ENCODE measurements at regions of chr2 and their contacts with region 1.

Region 1: DNA sequence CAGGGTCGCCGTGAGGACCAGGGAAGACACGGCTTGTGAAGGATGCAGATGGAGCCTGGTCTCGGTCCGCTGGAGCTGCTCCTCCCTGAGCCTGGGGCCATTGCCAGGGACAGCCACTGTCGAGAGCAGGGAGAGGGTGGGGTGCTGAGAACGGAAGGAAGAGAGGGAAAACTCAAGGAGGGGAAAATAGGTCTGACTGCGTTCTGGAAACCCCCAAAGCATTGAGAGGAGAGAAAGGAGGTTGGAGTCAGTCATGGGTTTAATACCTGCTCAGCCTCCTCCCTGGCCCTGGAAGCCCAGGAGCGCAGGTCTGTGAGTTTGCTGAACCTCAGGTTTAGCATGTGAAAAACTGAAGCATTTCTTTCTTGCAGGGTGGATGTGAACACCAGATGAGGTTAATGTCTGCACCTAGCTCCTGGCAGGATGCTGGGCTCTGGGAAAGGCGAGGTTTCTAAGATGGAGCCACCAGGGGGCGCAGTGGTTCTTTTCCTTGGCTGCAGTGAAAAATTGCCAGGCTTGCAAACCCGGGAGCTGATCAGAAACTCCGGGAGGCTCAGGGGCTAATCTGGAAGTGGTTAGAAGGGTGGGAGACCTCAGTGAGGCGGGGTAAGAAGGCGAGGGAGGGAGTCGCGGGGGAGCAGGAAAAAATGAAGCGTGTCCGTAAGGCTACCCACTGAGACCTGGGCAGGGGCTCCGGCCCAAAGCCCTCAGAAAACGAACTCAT is 33.6 kb upstream of the RNF149 start:
- DNase-seq: peak; percentile 68
- H3K4me3 ChIP-seq: no peak overlapping the region
- H3K27ac ChIP-seq: no peak overlapping the region
- H3K4me1 ChIP-seq: peaks cover 9% of the 10 kb centered on the region
- H3K27me3 ChIP-seq: no peaks in the 10 kb centered on the region
- CTCF ChIP-seq: peak; percentile 75 to 87
- POLR2A ChIP-seq: no peak

Region 2: DNA sequence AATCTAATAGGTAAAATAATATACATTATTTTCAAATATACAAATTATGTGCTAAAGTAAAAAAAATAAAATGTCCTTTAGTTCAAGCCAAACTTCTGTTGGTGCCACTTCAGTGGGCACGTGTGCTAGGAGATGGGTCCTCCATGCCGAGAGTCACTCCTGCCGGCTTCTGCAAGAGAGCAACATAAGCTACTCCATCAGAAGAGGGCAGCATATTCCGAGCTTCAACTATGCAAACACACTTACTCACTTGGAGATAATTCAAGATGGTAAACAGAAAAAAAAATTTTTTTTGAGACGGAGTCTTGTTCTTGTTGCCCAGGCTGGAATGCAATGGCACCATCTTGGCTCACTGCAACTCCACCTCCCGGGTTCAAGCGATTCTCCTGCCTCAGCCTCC is 65.0 kb before region 1 on chr2:
- CTCF ChIA-PET with region 1: interaction called, 13 read pairs
- POLR2A ChIA-PET with region 1: no interaction called
- dilution Hi-C with region 1: no loop called
- intact Hi-C with region 1: no loop called
- DNase-seq: peak; percentile 15
- H3K4me3 ChIP-seq: no peak overlapping the region
- H3K27ac ChIP-seq: no peak overlapping the region
- H3K4me1 ChIP-seq: peaks cover 3% of the 10 kb centered on the region
- H3K27me3 ChIP-seq: no peaks in the 10 kb centered on the region
- CTCF ChIP-seq: no peak
- POLR2A ChIP-seq: no peak

Region 3: DNA sequence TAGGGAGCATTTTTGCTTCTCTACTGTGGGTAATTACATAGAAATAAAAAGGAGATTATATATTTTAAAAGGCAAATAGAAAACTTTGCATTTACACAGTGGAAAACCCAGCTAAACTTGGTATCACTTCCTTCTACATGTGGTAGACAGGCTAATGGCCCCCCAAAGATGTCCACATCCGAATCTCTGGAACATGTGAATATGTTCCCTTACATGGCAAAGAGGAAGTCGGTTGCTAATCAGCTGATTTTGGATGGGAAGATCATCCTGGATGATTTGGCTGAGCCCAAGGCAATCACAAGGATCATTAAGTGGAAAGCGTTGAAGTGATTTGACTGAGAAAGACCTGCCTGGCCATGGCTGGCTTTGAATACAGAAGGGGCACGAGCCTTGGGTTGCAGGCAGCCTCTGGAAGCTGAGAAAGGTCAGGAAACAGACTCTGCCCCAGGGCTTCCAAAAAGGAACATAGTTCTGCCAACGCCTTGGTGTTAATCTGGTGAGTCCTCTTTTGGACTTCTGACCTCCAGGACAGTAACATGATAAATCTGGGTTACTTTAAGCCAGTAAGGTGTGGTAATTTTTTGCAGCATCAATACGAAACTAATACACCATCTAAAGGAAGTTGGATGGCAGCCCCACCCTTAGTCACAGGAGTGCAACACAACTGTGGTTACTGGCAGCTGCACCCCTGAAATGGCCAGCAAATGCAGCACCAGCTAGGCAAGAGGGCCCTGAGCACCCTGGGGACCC is 19.2 kb after region 1 on chr2:
- CTCF ChIA-PET with region 1: interaction called, 15 read pairs
- POLR2A ChIA-PET with region 1: no interaction called
- dilution Hi-C with region 1: no loop called
- intact Hi-C with region 1: no loop called
- DNase-seq: no peak
- H3K4me3 ChIP-seq: no peak overlapping the region
- H3K27ac ChIP-seq: no peak overlapping the region
- H3K4me1 ChIP-seq: no peaks in the 10 kb centered on the region
- H3K27me3 ChIP-seq: peaks cover 12 to 20% of the 10 kb centered on the region in 2 experiments
- CTCF ChIP-seq: no peak
- POLR2A ChIP-seq: no peak

Region 4: DNA sequence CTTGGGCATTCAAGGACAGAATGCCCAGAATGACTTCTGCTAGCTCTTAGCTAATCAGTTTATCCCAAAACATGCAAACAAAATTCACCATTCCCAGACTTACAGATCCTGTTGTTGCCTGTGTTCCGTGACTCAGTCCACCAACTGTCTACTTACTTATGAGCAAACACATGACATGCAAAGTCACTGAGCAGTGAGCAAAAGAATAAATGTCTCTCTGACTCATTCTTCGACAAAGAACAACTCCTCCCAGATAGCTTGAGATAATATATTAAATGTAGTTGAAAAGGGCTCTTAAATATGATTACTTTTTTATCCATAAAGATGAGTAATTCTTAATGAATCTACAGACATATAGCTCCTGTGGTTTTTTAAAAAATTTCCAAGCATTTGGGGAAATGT is 54.3 kb after region 1 on chr2:
- CTCF ChIA-PET with region 1: interaction called, 24 read pairs
- POLR2A ChIA-PET with region 1: no interaction called
- dilution Hi-C with region 1: no loop called
- intact Hi-C with region 1: no loop called
- DNase-seq: peak; percentile 89
- H3K4me3 ChIP-seq: no peak overlapping the region
- H3K27ac ChIP-seq: peak overlapping the region; percentile 55
- H3K4me1 ChIP-seq: peaks cover 4% of the 10 kb centered on the region
- H3K27me3 ChIP-seq: no peaks in the 10 kb centered on the region
- CTCF ChIP-seq: no peak
- POLR2A ChIP-seq: no peak

Region 5: DNA sequence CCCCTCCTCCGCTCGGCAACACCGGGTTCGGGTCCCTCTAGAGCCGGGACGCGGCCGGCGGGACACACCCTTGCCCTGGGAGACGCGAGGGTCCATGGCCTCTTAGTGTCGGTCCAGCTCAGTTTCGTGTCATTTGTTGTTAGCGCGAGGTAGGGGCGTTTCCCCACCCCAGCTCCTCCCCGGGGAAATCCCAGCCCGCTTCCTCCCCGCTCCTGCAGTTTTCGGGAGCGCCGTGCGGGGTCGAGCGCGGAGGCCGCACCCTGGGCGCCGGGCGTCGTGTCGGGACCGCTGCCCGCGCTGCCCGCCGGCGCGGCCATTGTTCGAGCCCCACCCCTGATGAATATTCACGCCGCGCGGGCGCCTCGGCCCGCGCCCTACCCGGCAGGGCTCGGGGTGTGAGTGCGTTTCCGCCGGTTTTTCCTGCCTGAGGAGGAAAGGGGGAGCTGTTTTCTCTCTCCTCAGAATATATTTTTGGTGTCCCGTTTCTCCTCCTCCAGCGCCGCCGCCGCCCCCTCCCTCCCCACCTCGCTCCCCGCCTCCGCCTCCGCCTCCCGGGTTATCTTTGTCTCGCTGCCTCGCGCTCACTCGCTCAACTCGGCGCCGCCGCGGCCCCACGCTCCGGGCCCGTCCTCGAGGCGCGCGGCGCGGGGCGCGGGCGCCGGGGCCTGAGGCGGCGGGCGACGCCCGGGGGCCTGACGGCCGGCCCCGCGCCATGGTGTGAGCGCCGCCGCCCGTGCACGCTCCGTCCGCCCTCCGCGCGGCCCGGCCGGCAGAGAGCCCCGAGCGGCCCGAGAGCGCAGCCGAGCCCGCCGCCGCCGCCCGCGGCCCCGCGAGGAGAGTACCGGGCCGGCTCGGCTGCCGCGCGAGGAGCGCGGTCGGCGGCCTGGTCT is 355.3 kb after region 1 on chr2 and contains the start of gene MAP4K4:
- CTCF ChIA-PET with region 1: interaction called, 19 read pairs
- POLR2A ChIA-PET with region 1: no interaction called
- dilution Hi-C with region 1: no loop called
- intact Hi-C with region 1: loop called (anchors 2 kb)
- DNase-seq: peak; percentile 67
- H3K4me3 ChIP-seq: peak within 1 kb of the TSS; percentile 55 to 98 (median 96)
- H3K27ac ChIP-seq: peak within 1 kb of the TSS; percentile 85
- H3K4me1 ChIP-seq: peaks cover 20% of the 10 kb centered on the region
- H3K27me3 ChIP-seq: no peaks in the 10 kb centered on the region
- CTCF ChIP-seq: peak in 1 of 2 donors; percentile 11
- POLR2A ChIP-seq: peak; percentile 88
- total RNA-seq, gene MAP4K4: 251 and 269 TPM in 2 replicates